Posterior cingulate gyrus (tissue), 11 donors: ENCODE measurements at regions of chr11 and their contacts with region 1.

Region 1: DNA sequence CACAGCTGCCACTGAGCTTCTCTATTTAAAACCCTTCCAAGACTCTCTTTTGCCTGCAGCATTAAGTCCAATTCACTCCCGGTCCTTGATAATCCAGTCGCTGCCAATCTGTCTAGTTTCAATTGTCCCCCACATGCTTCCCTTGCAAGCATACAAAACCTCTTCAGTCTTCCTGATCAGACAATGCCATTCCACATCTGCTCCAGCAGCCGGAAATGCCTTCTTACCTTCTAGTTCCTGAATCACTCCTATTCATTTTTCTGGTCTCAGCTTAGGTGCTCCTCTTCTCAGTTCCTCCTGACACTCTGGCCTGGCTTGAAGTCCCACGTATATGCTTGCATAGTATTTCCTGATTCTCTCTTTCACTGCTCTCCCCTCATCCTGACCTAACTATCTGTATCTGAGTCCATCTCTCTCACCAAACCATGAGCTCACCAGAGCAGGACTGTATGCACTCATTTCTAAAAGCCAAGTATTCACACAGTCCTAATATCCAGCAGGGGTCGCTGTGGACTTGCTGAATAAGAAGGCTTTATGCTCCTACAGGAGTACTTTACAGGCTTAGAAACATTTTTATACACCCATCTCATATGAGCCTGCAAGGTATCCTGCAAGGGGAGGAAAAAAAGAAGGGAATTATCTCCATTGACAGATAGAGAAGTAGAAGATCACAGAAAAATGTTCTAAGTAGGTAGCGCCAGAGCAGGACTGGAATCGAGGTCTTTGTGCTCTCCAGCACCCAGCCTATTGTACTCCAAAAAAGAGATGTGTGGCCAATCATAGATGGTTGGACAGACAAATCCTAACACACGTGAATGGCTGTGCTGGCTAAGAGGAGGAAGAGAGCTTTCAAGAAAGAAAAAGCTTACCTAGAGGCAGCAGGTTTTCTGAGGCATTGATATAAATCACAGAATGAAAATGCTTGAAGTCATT is 19.2 kb downstream of the XRRA1 start:
- DNase-seq: peak in 6 of 10 donors; percentile 50 to 81 (median 70)

Region 2: DNA sequence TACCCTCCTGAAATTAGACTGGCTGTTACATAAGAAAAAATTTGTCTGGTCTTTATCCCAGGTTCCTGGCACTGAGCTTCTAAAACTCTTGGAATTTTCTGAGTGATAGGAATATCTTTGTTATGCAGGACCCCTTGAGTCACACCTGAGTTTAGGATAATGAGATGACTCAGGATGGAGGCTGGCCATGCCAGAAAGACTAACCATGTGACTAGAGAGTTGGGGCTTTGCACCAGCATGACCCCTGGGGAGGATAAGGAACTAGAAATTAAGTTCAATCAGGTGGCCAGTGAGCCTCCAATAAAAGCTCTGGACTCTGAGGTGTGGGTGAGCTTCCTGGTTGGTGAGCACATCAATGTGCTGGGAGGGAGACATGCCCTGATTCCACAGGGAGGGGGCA is 69.0 kb before region 1 on chr11:
- intact Hi-C with region 1: no loop called
- DNase-seq: no peak

Region 3: GRCh38 chr11:74871037-74871436 is 58.7 kb before region 1 on chr11:
- intact Hi-C with region 1: no loop called
- DNase-seq: no peak

Region 4: GRCh38 chr11:75031771-75032549 is 102.3 kb after region 1 on chr11:
- intact Hi-C with region 1: loop called (anchors 1 kb)
- DNase-seq: peak in 9 of 10 donors; percentile 37 to 96 (median 81)

Region 5: DNA sequence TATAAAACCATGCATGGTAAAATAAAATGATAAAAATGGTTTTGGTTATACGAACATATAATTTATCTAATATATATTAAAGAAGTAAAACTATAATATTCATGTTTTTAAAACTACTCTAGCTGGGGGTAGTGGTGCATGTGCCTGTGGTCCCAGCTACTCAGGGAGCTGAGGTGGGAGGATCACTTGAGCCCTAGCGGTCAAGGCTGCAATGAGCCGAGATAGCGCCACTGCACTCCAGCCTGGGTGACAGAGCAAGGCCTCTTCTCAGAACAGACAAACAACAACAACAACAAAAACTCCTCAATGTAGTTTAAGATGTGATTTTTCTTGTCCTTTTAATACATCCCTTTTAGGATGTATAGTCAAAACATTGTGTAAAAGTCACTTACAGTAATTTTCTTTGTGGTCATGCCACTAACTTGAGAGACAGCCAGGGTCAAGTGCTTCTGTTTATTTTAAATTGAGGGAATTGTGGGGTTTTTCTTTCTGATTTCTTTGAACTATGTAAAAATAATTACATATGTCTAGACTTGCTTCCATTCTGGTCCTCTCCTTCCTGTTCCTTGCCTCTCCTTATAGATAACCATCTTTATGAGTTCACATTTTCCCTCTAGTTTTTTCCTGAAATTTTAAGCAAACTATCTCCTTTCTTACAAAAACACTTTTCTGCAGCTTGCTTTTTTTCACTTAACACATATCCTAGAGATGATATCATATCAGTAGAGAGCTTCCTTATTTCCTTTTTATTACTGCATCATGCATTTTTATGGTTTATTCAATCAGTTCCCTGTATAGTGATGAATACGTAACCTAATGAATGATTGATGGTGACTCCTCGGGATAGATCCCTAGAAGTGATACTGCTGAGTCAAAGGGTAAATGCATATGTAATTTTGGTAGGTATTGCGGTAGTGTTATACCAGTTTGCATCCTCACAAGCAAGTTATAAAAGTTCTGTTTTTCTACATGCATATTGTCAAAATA is 157.9 kb after region 1 on chr11:
- intact Hi-C with region 1: no loop called
- DNase-seq: no peak

Region 6: DNA sequence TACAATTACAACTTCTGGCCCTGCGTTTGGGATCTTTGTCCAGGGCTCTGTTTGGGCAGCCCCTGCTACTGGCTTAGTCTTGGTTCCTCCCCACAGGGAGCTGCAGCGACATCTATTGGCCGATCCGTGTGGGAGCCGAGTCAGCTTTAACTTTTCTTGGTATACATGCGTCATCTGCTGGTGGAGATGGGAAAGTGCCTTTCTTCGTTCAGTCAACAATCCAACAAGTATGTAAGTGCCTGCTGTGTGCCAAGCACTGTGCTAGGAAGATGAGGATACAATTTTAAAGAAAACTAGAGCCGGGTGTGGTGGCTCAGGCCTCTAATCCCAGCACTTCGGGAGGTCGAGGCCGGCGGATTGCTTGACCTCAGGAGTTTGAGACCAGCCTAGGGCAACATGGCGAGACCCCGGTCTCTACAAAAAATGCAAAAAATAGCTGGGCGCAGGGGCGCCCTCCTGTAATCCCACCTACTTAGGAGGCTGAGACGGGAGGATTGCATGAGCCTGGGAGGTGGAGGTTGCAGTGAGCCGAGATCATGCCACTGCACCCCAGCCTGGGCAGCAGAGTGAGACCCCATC is 319.1 kb after region 1 on chr11:
- intact Hi-C with region 1: loop called (anchors 2 kb)
- DNase-seq: peak; percentile 75 to 98 (median 88)